ENCODE measurements at regions of chr1 and their contacts with region 1.

Region 1: GRCh38 chr1:66633159-66633558 is 99.2 kb downstream of the SGIP1 start:
- DNase-seq: no peak
- ATAC-seq: no peak
- H3K4me3 ChIP-seq: no peak overlapping the region
- H3K27ac ChIP-seq: no peak overlapping the region
- H3K4me1 ChIP-seq: no peaks in the 10 kb centered on the region
- H3K27me3 ChIP-seq: no peaks in the 10 kb centered on the region

Region 2: GRCh38 chr1:66671455-66671854 is 38.3 kb after region 1 on chr1:
- intact Hi-C with region 1: loop called in 1 of 2 experiments (anchors 5 kb)
- DNase-seq: no peak
- ATAC-seq: no peak
- H3K4me3 ChIP-seq: no peak overlapping the region
- H3K27ac ChIP-seq: no peak overlapping the region
- H3K4me1 ChIP-seq: peaks cover 0 to 5% of the 10 kb centered on the region in 2 donors
- H3K27me3 ChIP-seq: no peaks in the 10 kb centered on the region

Region 3: DNA sequence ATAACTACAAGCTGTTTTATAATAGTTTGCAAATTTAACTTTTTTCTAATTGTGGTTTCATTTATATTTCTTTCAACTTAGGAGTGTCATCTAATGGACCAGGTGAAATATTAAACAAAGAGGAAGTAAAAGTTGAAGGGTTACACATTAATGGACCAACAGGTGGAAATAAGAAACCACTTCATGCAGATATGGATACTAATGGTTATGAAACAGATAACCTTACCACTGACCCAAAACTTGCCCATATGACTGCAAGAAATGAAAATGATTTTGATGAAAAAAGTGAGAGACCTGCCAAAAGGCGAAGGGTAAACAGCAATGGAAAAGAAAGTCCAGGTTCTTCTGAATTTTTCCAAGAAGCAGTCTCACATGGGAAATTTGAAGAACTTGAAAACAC is 351.3 kb after region 1 on chr1:
- intact Hi-C with region 1: no loop called
- DNase-seq: no peak
- ATAC-seq: no peak
- H3K4me3 ChIP-seq: no peak overlapping the region
- H3K27ac ChIP-seq: no peak overlapping the region
- H3K4me1 ChIP-seq: peaks cover 0 to 2% of the 10 kb centered on the region in 2 donors
- H3K27me3 ChIP-seq: no peaks in the 10 kb centered on the region

Measured in aorta (tissue), 5 donors.